ENCODE measurements at regions of chr11 and their contacts with region 1.

Region 1: DNA sequence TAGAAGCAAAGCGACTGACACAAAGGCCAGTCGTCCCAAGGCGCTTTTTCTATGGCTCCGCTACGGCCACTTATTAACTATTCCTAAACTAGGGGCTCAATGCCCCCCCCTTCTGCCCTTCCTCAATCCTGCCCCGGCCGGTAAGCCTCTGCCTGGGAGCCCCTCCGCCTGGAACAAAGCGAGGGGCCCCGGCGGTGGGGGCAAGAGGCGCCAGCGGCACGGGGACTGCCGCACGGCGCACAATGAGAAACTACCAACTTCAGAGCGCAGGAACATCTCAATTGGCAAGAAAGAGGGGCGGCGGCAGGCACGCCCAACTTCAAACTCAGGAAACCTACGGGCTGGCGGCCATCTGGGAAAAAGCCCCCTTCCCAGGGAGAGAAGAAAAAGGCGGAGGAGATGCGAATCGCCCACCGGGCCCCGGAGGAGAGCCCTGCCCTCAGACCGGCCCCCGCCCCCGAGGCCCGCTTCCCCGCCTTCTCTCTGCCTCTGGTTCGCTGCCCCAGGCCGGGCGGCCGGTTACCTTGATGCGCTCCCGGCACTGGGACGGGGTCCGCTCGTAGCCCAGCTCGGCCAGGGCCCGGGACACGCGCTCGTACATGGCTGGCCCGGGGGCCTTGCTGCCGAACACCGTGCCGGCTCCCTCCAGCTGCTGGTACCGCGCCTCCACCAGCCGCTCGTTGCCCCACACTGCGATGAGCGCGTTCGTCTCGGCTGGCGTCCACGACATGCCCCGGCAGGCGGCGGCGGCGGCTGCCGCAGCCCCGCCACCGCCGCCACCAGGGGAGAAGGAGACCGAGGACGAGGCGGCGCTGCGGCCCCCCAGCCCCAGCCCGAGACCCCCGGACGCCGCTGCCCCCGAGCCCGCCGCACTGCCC is 619 bp downstream of the MSANTD2 start:
- DNase-seq: peak; percentile 65
- H3K4me3 ChIP-seq: peak overlapping the region; percentile 97
- H3K27ac ChIP-seq: peak overlapping the region; percentile 99
- H3K4me1 ChIP-seq: peaks cover 34% of the 10 kb centered on the region
- H3K27me3 ChIP-seq: no peaks in the 10 kb centered on the region
- CTCF ChIP-seq: no peak

Region 2: DNA sequence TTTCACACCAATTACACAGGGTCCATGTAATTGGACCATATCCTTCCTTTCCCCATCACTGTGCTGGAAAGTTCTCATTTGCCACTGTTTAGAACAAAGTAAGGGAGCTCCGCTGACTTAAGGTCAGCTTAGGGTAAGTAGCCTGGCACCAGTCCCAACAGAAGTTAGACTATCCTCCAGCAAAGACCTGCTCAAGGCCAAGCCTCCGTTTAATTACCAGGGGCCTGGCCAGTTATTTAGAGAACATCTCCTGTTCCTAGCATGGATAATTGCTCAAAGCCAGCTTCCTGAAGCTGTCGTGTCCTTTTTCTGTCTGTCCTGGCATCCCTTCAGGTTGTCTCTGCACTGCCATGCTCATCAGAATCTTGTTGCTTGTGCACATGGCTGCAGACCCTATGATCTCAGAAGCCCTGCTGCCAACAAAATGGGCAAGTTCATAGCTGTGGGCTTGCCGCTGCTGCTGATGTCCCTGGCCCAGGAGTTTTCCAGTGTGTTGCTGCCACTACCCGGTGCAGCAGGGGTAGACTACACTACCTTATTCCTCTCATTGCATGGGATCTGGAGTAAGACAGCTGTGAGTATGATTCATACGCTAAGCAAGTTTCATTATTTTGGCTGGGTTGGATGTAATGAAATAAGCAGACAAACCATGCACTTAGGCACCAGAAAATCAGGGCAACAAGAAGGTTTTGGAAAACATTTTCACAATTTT is 221.7 kb before region 1 on chr11:
- CTCF ChIA-PET with region 1: no interaction called
- POLR2A ChIA-PET with region 1: no interaction called
- intact Hi-C with region 1: no loop called
- DNase-seq: no peak
- H3K4me3 ChIP-seq: no peak overlapping the region
- H3K27ac ChIP-seq: no peak overlapping the region
- H3K4me1 ChIP-seq: no peaks in the 10 kb centered on the region
- H3K27me3 ChIP-seq: no peaks in the 10 kb centered on the region
- CTCF ChIP-seq: no peak

Region 3: GRCh38 chr11:124699547-124699946 is 100.0 kb before region 1 on chr11:
- CTCF ChIA-PET with region 1: no interaction called
- POLR2A ChIA-PET with region 1: no interaction called
- intact Hi-C with region 1: no loop called
- DNase-seq: no peak
- H3K4me3 ChIP-seq: no peak overlapping the region
- H3K27ac ChIP-seq: no peak overlapping the region
- H3K4me1 ChIP-seq: no peaks in the 10 kb centered on the region
- H3K27me3 ChIP-seq: no peaks in the 10 kb centered on the region
- CTCF ChIP-seq: no peak

Region 4: GRCh38 chr11:125333354-125334073 is 533.9 kb after region 1 on chr11:
- CTCF ChIA-PET with region 1: no interaction called
- POLR2A ChIA-PET with region 1: interaction called, 10 read pairs
- intact Hi-C with region 1: no loop called
- DNase-seq: no peak
- H3K4me3 ChIP-seq: no peak overlapping the region
- H3K27ac ChIP-seq: no peak overlapping the region
- H3K4me1 ChIP-seq: no peaks in the 10 kb centered on the region
- H3K27me3 ChIP-seq: no peaks in the 10 kb centered on the region
- CTCF ChIP-seq: no peak

Measured in A673 (cell line).